Aorta (tissue), 5 donors: ENCODE measurements at regions of chr2 and their contacts with region 1.

Region 1: DNA sequence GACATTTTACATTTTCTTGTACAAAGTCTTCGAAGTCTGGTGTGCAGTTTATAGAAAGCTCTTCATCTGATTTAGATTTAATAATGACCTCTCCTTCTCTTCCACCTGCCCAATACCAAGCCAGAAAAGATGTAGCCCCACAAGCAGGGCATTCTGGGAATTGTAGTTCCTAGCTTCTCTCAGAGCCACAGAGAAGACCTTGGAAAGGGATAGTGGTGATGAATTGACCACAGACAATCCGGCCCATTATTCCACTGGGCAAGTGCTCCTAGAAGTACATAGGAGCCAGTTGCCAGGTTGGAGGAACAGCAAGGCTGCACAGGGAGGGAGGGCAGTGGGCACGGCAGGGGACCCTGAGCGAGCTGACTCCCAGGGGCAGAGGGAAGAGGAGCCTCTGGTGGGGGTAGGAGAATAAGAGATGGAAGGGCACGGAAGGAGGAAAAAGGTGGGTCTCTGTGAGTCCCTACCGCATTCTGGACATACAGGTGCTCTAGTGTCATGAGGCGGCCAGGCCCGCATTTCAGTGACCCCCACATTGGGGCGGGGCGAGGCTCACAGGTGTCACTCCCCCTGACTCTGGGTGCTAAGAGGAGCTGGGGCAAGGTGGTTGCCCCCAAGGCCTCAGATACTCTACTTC is 152.5 kb upstream of the HAAO start:
- DNase-seq: no peak
- ATAC-seq: no peak
- H3K4me3 ChIP-seq: no peak overlapping the region
- H3K27ac ChIP-seq: no peak overlapping the region
- H3K4me1 ChIP-seq: no peaks in the 10 kb centered on the region
- H3K27me3 ChIP-seq: no peaks in the 10 kb centered on the region

Region 2: GRCh38 chr2:43024515-43025011 is 79.7 kb after region 1 on chr2:
- intact Hi-C with region 1: loop called in 1 of 2 experiments (anchors 5 kb)
- DNase-seq: peak; percentile 76 to 90
- ATAC-seq: peak; percentile 64
- H3K4me3 ChIP-seq: no peak overlapping the region
- H3K27ac ChIP-seq: no peak overlapping the region
- H3K4me1 ChIP-seq: peaks cover 0 to 1% of the 10 kb centered on the region in 2 donors
- H3K27me3 ChIP-seq: no peaks in the 10 kb centered on the region

Region 3: DNA sequence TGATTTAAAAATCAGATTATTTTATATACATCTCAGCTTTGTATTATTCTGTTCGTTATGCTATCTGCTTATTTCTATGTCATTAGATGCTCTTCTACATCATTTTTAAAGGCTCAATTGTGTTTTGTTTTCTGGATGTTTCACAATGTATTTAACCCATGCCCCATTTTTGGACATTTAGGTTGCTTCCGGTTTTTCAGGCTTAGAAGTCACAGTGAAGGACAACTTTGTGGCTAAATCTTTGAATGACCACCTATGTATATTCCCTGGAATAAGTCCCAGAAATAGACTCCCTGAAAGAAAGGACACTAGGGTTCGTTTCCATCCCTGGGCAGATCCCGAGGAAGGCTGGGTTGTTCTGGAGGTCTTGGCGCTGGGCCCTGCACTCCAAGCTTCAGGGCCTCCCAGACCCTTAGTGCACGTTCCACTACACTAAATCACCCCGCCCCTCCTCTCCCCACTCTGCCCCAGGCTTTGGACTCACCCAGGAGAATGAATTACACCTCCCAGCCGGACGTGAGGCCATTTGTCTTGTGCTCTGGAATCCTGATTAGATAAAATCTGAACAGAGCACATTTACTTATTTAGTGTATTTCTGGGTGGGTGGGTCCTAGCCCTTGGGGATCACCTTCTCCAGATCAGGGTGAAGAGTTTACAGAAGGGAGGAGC is 93.3 kb after region 1 on chr2:
- intact Hi-C with region 1: no loop called
- DNase-seq: peak; percentile 44 to 78
- ATAC-seq: no peak
- H3K4me3 ChIP-seq: no peak overlapping the region
- H3K27ac ChIP-seq: no peak overlapping the region
- H3K4me1 ChIP-seq: no peaks in the 10 kb centered on the region
- H3K27me3 ChIP-seq: no peaks in the 10 kb centered on the region

Region 4: GRCh38 chr2:43542285-43542937 is 597.5 kb after region 1 on chr2:
- intact Hi-C with region 1: loop called (anchors 5 kb)
- DNase-seq: no peak
- ATAC-seq: peak; percentile 72
- H3K4me3 ChIP-seq: no peak overlapping the region
- H3K27ac ChIP-seq: no peak overlapping the region
- H3K4me1 ChIP-seq: peaks cover 2 to 17% of the 10 kb centered on the region in 2 donors
- H3K27me3 ChIP-seq: no peaks in the 10 kb centered on the region